ENCODE measurements at regions of chr20 and their contacts with region 1.

Region 1: GRCh38 chr20:49757597-49757996 is 43.9 kb upstream of the B4GALT5 start:
- DNase-seq: no peak
- H3K4me3 ChIP-seq: no peak overlapping the region
- H3K27ac ChIP-seq: no peak overlapping the region
- H3K4me1 ChIP-seq: peaks cover 34% of the 10 kb centered on the region
- H3K27me3 ChIP-seq: no peaks in the 10 kb centered on the region
- CTCF ChIP-seq: no peak

Region 2: DNA sequence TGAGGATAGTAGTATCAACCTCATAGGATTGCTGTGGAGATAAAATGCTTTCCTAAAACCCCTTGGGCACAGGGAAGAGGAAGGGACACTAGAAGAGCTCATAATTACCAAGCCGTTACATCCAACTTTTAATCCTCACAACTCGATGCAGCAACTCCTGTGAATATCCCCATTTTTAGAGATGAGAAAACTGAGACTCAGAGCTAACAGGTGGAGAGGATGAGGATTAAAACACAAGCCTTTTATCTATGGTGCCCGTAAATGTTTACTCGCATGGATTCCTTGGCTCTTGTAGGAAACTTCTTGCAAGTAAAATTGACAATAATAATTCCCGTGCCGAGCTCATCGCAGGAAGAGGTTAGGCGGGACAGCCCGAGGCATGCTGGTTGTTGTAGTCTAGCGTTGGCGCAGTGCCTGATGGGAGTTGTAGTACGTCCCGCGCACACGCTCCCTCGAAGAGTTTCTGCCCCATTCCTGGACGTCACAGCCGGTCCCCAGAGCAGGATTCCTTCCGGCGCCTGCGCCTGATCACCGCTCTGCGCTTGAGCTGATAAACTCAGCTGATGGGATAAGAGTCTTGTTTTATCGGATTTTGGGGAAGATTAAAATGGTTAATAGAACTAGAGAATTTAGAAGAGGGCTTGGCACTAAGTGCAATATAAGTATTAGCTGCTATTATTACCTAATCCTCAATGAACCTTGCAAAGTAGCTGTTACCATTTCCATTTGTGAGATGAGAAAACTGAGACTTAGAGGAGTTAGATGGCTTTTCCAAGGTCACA is 358.2 kb after region 1 on chr20:
- CTCF ChIA-PET with region 1: no interaction called
- POLR2A ChIA-PET with region 1: interaction called, 14 read pairs
- intact Hi-C with region 1: no loop called
- DNase-seq: peak; percentile 90 to 95
- H3K4me3 ChIP-seq: peak overlapping the region; percentile 73
- H3K27ac ChIP-seq: peak overlapping the region; percentile 20; the same call in 1 of the 2 replicates
- H3K4me1 ChIP-seq: peaks cover 27% of the 10 kb centered on the region
- H3K27me3 ChIP-seq: no peaks in the 10 kb centered on the region
- CTCF ChIP-seq: no peak

Measured in PC-9 (cell line).